ENCODE measurements at regions of chr13 and their contacts with region 1.

Region 1: GRCh38 chr13:29508130-29508875 is 87.2 kb downstream of the SLC7A1 start:
- DNase-seq: peak; percentile 77
- ATAC-seq: peak; percentile 82
- H3K4me3 ChIP-seq: no peak overlapping the region
- H3K4me3 Mint-ChIP-seq: no peak overlapping the region
- H3K27ac ChIP-seq: no peak overlapping the region
- H3K27ac Mint-ChIP-seq: no peak overlapping the region
- H3K4me1 ChIP-seq: peaks cover 0 to under 1% of the 10 kb centered on the region in 2 donors
- H3K4me1 Mint-ChIP-seq: peaks cover 6% of the 10 kb centered on the region
- H3K27me3 ChIP-seq: peaks cover 0 to 19% (median 6%) of the 10 kb centered on the region in 4 experiments
- H3K27me3 Mint-ChIP-seq: peaks cover 18% of the 10 kb centered on the region
- CTCF ChIP-seq: peak; percentile 98

Region 2: DNA sequence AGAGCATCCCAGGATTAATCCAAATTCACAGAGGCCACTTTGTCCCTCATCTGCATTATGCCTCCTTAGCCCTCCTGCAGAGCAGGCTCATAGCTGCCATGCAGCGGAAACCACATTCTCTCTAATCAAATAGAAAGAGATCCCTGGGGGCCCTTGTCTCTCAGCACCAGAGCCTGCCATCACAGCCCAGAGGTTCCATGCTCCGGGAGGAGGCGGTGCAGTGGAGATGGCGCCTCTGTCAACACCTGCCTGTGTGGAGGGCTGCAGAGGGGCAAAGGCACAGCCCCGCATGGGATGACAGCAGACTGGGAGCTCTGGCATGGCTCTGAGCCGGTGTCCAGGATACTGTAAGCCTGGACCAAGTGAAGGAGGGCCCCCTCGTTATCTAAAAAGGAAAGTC is 24.1 kb before region 1 on chr13:
- CTCF ChIA-PET with region 1: interaction called, 17 read pairs
- POLR2A ChIA-PET with region 1: no interaction called
- intact Hi-C with region 1: no loop called
- DNase-seq: peak; percentile 34
- ATAC-seq: peak; percentile 73
- H3K4me3 ChIP-seq: no peak overlapping the region
- H3K4me3 Mint-ChIP-seq: peak overlapping the region; percentile 52
- H3K27ac ChIP-seq: no peak overlapping the region
- H3K27ac Mint-ChIP-seq: no peak overlapping the region
- H3K4me1 ChIP-seq: peaks cover 10 to 19% of the 10 kb centered on the region in 2 donors
- H3K4me1 Mint-ChIP-seq: peaks cover 14% of the 10 kb centered on the region
- H3K27me3 ChIP-seq: peaks cover 0 to 5% (median 1%) of the 10 kb centered on the region in 4 experiments
- H3K27me3 Mint-ChIP-seq: peaks cover 28% of the 10 kb centered on the region
- CTCF ChIP-seq: no peak

Region 3: DNA sequence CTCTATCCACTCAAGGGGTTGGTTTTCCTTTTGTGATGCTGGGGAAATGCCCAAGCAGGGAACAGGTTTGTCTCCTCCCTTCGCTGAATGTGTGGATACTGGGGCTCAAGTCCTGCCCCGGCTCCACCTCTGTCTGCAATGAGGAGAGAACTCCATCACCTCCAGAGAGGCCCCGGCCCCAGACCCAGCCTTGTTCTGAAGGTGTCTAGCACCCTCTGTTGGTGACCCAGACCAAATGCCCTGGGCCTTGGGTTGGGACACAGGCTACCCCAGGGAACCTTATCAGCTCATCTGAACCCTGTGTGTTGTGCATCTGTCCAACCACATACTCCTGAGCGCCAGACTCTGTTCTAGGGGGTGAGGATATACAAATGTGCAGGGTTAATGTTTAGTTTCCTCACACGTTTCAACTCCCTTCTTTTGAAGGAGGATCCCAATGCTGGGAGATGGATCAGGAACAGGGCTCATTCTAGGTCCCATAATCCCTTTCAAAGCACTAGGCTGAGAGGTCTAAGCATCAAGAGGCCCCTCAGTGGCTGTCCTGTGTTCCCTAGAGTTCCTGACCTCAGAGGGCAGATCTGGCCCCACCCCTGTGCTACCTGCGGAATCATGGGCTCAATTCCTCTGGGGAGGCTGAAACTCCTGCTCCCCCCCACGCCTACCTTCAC is 199.7 kb after region 1 on chr13:
- CTCF ChIA-PET with region 1: interaction called, 26 read pairs
- POLR2A ChIA-PET with region 1: no interaction called
- intact Hi-C with region 1: loop called (anchors 1 kb)
- DNase-seq: peak; percentile 33
- ATAC-seq: no peak
- H3K4me3 ChIP-seq: no peak overlapping the region
- H3K4me3 Mint-ChIP-seq: no peak overlapping the region
- H3K27ac ChIP-seq: no peak overlapping the region
- H3K27ac Mint-ChIP-seq: no peak overlapping the region
- H3K4me1 ChIP-seq: no peaks in the 10 kb centered on the region
- H3K4me1 Mint-ChIP-seq: no peaks in the 10 kb centered on the region
- H3K27me3 ChIP-seq: peaks cover 0 to 2% (median 0%) of the 10 kb centered on the region in 4 experiments
- H3K27me3 Mint-ChIP-seq: peaks cover 24% of the 10 kb centered on the region
- CTCF ChIP-seq: no peak

Region 4: DNA sequence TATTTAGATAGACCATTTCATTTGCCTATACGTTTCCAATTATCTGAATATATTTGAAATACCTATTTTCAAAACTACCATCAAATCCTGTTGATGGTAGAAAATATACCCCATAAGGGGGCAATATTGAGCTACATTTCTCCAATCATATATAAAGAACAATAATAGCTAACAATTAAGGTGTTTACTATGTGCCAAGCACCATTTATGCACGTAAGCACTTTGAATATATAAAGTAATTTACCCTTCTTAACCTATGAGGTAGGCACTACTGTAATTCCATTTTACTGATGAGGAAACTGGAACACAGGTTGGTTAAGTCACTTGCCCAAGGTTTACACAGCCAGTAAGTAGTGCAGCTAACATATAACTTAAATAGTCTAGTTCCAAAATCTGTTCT is 262.9 kb after region 1 on chr13:
- CTCF ChIA-PET with region 1: interaction called, 17 read pairs
- POLR2A ChIA-PET with region 1: no interaction called
- intact Hi-C with region 1: loop called (anchors 2 kb)
- DNase-seq: peak; percentile 69
- ATAC-seq: no peak
- H3K4me3 ChIP-seq: no peak overlapping the region
- H3K4me3 Mint-ChIP-seq: no peak overlapping the region
- H3K27ac ChIP-seq: no peak overlapping the region
- H3K27ac Mint-ChIP-seq: no peak overlapping the region
- H3K4me1 ChIP-seq: no peaks in the 10 kb centered on the region
- H3K4me1 Mint-ChIP-seq: no peaks in the 10 kb centered on the region
- H3K27me3 ChIP-seq: no peaks in the 10 kb centered on the region
- H3K27me3 Mint-ChIP-seq: no peaks in the 10 kb centered on the region
- CTCF ChIP-seq: peak; percentile 82

Region 5: GRCh38 chr13:29923554-29924481 is 415.5 kb after region 1 on chr13:
- CTCF ChIA-PET with region 1: interaction called, 49 read pairs
- POLR2A ChIA-PET with region 1: no interaction called
- intact Hi-C with region 1: loop called (anchors 1 kb)
- DNase-seq: peak; percentile 69
- ATAC-seq: peak; percentile 66
- H3K4me3 ChIP-seq: no peak overlapping the region
- H3K4me3 Mint-ChIP-seq: no peak overlapping the region
- H3K27ac ChIP-seq: no peak overlapping the region
- H3K27ac Mint-ChIP-seq: no peak overlapping the region
- H3K4me1 ChIP-seq: peaks cover 0 to 4% of the 10 kb centered on the region in 2 donors
- H3K4me1 Mint-ChIP-seq: no peaks in the 10 kb centered on the region
- H3K27me3 ChIP-seq: peaks cover 0 to 7% (median 0%) of the 10 kb centered on the region in 4 experiments
- H3K27me3 Mint-ChIP-seq: peaks cover 13% of the 10 kb centered on the region
- CTCF ChIP-seq: peak; percentile 89